ENCODE measurements at regions of chr17 and their contacts with region 1.

Region 1: GRCh38 chr17:78324391-78325075 is 35.3 kb downstream of the SOCS3 start:
- DNase-seq: peak; percentile 92 to 95 (median 93)
- ATAC-seq: peak; percentile 79 to 91 (median 82)
- H3K4me3 ChIP-seq: peak overlapping the region in 6 of 12 donors; percentile 6 to 34 (median 28)
- H3K27ac ChIP-seq: peak overlapping the region; percentile 78 to 98 (median 86)
- H3K4me1 ChIP-seq: peaks cover 0 to 50% (median 37%) of the 10 kb centered on the region in 12 donors
- H3K27me3 ChIP-seq: no peaks in the 10 kb centered on the region
- CTCF ChIP-seq: no peak
- POLR2A ChIP-seq: peak in 1 of 2 donors; percentile 38

Region 2: DNA sequence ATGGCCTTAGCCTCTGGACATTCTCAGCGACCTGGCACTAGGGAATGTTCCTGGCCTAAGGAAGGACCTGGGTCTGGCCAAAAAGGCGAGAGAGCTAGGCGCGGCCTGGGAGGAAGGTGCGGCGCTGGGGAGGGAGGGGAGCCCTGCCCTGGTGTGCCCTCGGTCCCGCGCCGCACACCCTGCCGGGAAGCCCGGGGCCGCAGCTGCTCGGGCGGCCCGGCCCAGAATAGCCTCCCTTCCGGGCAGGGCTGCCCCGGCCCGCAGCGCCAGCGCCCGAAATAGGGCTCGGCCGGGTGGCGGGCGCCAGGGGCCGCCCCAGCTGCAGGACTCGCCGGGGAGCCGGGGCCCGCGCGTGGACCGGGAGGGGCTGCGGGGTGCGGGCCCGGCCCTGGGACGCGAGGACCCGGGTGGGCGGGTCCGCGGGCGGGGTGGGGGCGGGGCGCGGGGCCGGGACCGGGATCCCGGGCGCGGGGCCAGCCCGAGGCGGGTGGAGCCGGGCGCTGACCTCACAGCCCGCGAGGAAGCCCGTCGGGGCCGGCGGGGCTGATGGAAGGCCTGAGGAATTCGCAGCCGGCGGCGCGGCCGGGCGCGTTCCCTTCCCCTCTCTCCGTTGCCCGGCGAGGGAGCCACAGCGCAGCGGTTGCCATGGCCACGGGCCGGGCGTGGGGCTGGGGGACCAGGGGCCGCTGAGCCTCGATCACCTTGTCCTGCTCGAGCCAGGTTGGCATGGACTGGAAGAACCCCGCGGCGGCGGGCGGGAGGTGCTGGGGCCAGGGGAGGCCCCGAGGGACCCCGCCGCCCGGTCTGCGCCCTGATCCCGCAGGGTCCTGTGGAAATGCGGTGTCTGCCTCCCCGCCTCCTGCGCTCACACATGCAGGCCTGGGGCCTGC is 17.3 kb after region 1 on chr17:
- intact Hi-C with region 1: loop called in 1 of 10 experiments (anchors 2 kb)
- DNase-seq: peak; percentile 86 to 90 (median 88)
- ATAC-seq: peak; percentile 32 to 77 (median 70)
- H3K4me3 ChIP-seq: peak overlapping the region in 11 of 12 donors; percentile 13 to 62 (median 49)
- H3K27ac ChIP-seq: peak overlapping the region; percentile 76 to 100 (median 92)
- H3K4me1 ChIP-seq: peaks cover 19 to 80% (median 39%) of the 10 kb centered on the region in 12 donors
- H3K27me3 ChIP-seq: no peaks in the 10 kb centered on the region
- CTCF ChIP-seq: peak in 7 of 12 donors; percentile 2 to 29 (median 12)
- POLR2A ChIP-seq: no peak

Region 3: DNA sequence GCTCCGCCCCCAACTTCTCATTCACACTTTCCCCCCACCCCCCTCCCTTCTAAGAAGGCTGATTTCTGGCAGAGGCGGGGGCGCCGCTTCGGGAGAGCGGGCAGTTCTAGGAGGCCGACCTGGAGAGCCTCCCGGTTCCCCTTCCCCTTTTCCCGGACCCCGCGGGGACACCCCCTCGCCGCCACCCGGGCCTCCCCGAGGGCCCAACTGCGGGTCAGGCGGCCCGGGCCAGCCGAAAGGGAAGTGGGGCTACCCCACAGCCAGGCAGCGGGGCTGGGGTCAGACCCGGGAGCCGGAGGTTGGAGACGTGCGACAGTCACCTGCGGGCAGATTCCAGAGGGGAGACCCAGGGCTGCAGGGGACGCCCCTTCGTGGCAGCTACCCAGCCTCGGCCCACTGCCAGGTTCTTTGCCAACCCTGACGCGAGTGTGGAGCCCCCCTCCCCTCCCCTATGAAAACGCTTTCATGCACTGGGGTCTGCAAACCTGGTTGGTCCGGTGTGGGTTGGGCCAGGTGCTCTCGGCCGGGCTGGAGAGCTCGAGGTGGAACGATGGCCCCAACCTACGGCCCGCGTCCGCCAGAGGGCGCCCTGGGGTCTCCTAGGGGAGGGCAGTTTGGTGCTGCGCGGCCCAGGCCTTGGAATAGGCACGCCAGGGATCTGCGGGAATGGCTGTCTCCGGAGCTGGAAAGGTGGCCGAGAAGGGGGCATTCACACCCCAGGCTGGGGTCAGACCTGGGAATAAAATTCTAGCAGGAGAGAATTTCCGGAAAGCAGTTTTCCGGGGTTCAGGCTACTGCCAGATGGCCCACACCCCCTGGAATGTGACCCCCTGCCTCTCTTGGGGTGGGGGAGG is 36.1 kb after region 1 on chr17:
- intact Hi-C with region 1: loop called in 3 of 10 experiments (anchors 1 to 5 kb)
- DNase-seq: peak; percentile 92 to 97 (median 94)
- ATAC-seq: peak; percentile 70 to 77 (median 72)
- H3K4me3 ChIP-seq: peak overlapping the region in 11 of 12 donors; percentile 37 to 97 (median 80)
- H3K27ac ChIP-seq: peak overlapping the region; percentile 85 to 100 (median 96)
- H3K4me1 ChIP-seq: peaks cover 0 to 57% (median 41%) of the 10 kb centered on the region in 12 donors
- H3K27me3 ChIP-seq: no peaks in the 10 kb centered on the region
- CTCF ChIP-seq: peak; percentile 82 to 96 (median 93)
- POLR2A ChIP-seq: no peak

Region 4: DNA sequence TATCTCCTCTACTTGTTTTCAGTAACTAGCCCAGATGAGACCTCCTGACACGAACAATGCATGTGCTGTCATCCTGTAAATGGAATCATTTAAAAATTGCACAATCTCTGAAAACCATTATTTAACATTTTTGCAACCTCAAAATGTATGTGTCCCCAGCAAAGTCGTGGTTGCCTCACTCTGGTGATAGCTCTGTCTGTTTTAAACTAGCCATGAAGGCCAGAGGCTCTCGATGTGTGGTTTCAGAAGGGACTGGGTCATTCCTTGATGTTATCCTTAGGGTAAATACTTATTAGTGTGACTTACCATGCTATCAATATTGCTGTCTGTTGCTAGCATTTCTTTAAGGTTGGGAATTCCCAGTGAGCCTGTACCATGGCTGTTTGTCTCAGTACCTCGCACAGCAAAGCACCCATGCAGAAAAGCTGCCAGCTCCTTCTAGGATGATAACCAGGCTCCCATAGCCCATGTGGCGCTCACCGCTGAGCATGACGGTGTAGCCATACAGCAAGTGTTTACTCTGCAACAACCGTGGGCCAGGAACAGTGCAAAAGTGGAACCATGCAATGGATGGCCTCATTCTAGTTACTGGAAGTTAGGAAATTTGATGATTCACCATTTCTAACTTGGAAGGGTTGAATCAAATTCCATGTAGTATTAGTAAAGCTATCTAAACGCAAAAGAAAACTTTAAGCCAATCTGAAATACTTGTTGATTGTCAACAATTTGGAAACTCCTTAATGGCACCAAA is 51.0 kb after region 1 on chr17:
- intact Hi-C with region 1: no loop called
- DNase-seq: peak in 3 of 5 donors; percentile 16 to 63 (median 50)
- ATAC-seq: peak in 2 of 4 donors; percentile 46 to 60
- H3K4me3 ChIP-seq: no peak overlapping the region
- H3K27ac ChIP-seq: peak overlapping the region in 9 of 12 donors; percentile 11 to 98 (median 49)
- H3K4me1 ChIP-seq: peaks cover 3 to 76% (median 20%) of the 10 kb centered on the region in 12 donors
- H3K27me3 ChIP-seq: no peaks in the 10 kb centered on the region
- CTCF ChIP-seq: no peak
- POLR2A ChIP-seq: no peak

Measured in heart left ventricle (tissue), 16 donors.